Activated T-helper 1 cell treated with anti-CD3 and anti-CD28 coated beads, Interleukin-12 subunit alpha, Interleukin-12 subunit beta, Interleukin-2, Interleukin-4 antibody, amounts not matched to agents 30 ng/mL and 10 ng/mL and 1 ng/mL, durations not matched to agents 14 hours and 24 hours and 36 hours (primary cell): ENCODE measurements at regions of chr5 and their contacts with region 1.

Region 1: GRCh38 chr5:154467655-154468354 is 10.2 kb downstream of the HAND1 start:
- DNase-seq: peak; percentile 54
- H3K4me3 Mint-ChIP-seq: no peak overlapping the region
- H3K27ac Mint-ChIP-seq: peak overlapping the region; percentile 48
- H3K4me1 Mint-ChIP-seq: no peaks in the 10 kb centered on the region
- H3K27me3 Mint-ChIP-seq: peaks cover 49% of the 10 kb centered on the region

Region 2: DNA sequence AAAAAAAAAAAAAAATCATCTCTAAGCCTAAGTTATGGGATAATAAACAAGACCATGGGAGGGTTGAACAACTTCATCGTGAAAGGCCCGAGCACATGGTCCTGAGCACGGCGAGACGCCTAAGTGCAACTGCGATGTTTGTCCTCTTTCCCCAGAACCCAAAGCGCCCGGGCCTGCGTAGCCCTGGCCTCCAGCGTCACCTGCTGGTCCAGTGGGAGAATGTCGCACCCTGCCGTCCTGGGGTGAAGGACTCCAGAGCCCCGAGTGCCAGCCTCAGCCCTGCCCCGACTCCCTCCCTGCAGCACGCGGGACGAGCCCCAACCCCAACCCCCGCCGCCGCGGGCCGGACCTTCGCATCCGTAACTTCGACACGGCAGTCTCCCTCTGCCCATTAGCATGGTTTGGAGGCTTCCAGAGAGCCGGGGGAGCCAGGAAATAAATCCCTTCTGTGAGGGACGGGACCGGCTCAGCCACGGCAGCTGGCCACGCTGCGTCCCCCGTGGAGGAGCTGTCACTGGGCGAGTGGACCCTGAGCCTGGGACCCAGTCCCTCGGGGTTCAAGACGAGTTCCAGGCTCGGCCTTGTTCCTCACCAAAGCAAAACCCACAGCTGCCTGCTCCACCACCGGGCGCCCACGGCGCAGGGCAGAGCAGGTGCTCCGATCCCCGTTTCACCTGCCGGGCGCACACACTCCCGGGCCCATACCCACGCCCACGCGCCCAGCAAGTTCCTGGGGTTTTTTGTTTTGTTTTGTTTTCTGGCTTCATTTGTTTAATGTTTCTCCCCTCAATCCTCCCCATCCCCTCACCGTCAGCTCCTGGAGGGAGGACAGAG is 142.7 kb after region 1 on chr5:
- intact Hi-C with region 1: loop called (anchors 1 kb)
- DNase-seq: peak; percentile 47
- H3K4me3 Mint-ChIP-seq: no peak overlapping the region
- H3K27ac Mint-ChIP-seq: no peak overlapping the region
- H3K4me1 Mint-ChIP-seq: no peaks in the 10 kb centered on the region
- H3K27me3 Mint-ChIP-seq: peaks cover 44% of the 10 kb centered on the region